Dorsolateral prefrontal cortex (tissue), 120 donors: ENCODE measurements at regions of chr10 and their contacts with region 1.

Region 1: GRCh38 chr10:84429926-84430520 is 101.6 kb downstream of the CCSER2 start:
- DNase-seq: peak in 8 of 10 donors; percentile 39 to 79 (median 52)
- H3K4me3 ChIP-seq: no peak overlapping the region
- H3K27ac ChIP-seq: no peak overlapping the region
- H3K27me3 ChIP-seq: no peaks in the 10 kb centered on the region
- CTCF ChIP-seq: peak; percentile 34 to 81 (median 66)

Region 2: DNA sequence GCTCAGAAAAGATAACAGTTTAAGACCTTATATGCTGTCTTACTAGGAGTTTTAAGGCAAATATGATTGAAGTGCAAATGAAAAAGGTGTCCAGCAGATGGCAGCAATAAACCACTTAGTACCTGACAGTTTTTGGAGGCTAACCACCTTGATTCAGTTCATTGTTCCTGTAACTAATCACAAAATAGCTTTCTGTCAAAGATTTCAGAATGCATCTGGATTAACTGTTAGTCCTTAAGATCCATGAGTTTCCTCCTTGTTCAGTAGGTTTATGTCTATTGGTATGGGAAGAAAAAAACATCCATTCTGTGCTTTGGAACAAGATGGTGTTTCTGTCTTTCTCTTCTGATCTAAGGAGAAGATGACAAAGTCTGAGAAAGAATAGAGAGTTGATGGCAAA is 55.0 kb before region 1 on chr10:
- intact Hi-C with region 1: loop called in 1 of 2 experiments (anchors 10 kb)
- DNase-seq: peak in 2 of 10 donors; percentile 25 to 43
- H3K4me3 ChIP-seq: no peak overlapping the region
- H3K27ac ChIP-seq: peak overlapping the region in 2 of 59 donors; percentile 5 to 31
- H3K27me3 ChIP-seq: no peaks in the 10 kb centered on the region
- CTCF ChIP-seq: peak; percentile 56 to 94 (median 78)

Region 3: DNA sequence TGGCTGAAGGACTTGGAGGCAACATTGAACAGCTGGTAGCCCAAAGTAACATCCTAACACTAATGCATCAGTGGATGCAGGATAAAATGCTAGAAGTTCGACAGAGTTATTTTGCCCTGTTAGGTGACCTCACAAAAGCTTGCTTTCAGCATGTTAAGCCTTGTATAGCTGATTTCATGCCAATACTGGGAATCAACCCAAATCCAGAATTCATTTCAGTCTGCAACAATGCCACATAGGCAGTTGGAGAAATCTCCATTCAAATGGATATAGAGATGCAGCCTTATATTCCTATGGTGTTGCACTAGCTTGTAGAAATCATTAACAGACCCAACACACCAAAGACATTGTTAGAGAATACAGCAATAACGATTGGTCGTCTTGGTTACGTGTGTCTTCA is 38.7 kb before region 1 on chr10:
- intact Hi-C with region 1: loop called in 1 of 2 experiments (anchors 5 kb)
- DNase-seq: no peak
- H3K4me3 ChIP-seq: peak overlapping the region in 4 of 59 donors; percentile 1 to 37 (median 16)
- H3K27ac ChIP-seq: peak overlapping the region in 53 of 59 donors; percentile 8 to 83 (median 63)
- H3K27me3 ChIP-seq: no peaks in the 10 kb centered on the region
- CTCF ChIP-seq: no peak